Activated CD4-positive, alpha-beta T cell treated with anti-CD3 and anti-CD28 coated beads, Interleukin-2, amount 10 ng/mL, durations not matched to agents 7 days and 5 days (primary cell): ENCODE measurements at regions of chr20 and their contacts with region 1.

Region 1: DNA sequence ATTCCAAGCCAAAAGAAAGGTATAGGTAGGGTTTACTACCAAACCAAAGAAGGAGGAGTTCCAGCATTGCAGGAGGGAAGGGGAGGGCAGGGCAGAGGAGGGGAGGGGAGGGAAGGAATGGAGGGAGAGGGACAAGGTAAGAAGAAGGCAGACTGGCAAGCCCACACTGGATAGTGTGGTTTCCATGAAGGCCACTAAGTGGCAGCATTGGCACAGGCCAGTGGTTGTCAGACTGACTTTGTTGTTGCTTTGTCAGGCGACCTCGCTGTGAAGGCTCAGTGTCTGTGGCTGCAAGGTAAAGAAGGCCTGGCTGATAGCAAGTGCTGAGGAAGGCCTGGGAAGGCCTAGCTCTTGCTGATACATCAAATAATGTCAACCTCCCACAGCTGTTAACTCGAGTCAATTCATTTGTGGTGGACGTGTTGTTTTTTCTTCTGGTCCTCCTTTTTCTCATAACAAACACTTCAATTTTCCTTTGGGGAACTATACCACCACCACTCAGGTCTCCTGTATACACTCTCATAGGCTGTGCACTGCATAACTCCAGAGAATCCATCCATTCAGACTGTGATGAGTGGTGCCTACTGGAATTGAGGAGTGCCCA is 7.7 kb upstream of the ZNF334 start:
- DNase-seq: peak; percentile 63
- H3K4me3 Mint-ChIP-seq: no peak overlapping the region
- H3K27ac Mint-ChIP-seq: no peak overlapping the region
- H3K4me1 Mint-ChIP-seq: no peaks in the 10 kb centered on the region
- H3K27me3 Mint-ChIP-seq: peaks cover 25% of the 10 kb centered on the region

Region 2: DNA sequence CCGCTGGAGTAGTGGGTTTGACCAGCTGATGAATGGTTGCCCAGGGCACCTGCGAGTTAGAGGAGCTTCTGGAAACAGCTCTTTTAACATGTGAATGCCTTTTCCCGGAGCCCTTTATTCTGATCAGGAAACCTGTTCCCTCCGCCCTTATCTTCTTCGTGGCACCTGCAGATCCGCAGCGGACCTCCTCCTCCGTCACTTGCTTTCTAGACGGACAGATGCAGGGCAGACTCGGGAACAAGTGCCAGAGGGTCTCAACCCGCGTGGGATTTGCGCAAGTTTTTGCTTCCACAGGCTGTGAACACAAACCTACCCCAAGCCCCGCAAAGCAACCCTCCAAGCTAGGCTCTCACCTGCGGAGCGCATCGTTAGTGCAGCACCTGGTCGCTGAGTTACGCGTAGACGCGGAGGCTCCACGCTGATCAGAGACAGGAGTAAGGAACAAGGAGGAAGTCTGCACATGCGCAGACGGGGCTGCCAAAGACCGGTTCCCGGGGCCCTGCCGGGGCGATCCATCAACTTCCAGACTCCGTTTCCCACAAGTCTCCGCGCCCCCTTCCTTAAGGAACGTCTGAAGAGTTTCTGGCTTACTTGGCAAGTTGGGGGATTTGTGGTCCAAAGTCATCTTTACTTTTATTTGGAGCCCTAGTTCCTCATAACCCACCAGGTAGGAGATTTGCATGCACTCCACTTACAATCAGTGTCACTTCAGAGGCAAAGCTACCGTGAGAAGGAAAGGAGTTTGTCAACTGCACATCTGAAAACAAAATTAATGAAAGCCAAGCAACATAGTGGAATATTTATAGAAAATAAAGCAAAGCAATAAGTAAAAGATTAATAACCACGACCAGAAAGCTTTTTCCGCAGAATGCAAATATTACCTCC is 62.0 kb before region 1 on chr20:
- CTCF ChIA-PET with region 1: no interaction called
- POLR2A ChIA-PET with region 1: no interaction called
- DNase-seq: no peak
- H3K4me3 Mint-ChIP-seq: no peak overlapping the region
- H3K27ac Mint-ChIP-seq: no peak overlapping the region
- H3K4me1 Mint-ChIP-seq: no peaks in the 10 kb centered on the region
- H3K27me3 Mint-ChIP-seq: peaks cover 29% of the 10 kb centered on the region

Region 3: DNA sequence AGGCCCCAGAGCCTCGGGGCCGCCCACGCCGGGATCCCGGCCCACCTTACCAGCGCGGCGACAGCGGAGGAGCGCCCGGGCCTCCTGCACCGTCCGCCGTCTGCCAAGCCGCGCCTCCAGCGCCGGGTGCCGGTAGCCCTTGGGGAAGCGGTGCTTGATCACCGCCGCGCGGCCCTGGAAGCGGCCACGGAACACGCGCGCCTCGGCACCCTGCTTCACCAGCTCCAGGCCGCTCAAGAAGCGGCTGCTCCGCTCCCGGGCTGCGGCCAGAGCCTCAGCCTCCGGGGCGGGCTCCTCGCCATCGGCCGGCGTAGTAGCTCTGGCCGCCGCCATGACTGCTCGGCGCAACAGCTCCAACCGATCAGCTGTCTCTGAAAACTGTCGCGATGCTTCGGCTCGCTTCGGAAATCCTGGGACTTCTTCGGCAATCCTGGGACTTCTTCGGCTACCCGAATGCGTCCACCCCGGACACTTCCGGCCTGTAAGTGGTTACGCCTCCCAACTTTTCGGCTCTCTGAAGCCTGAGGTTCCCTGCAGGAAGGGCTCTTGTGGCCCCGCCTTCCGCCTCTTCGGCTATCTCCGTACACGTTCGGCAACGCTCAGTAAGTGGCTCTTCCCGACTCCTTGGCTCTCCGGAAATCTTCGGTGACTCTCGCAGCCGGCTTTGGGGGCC is 168.1 kb after region 1 on chr20 and contains the start of gene TP53RK:
- CTCF ChIA-PET with region 1: interaction called, 10 read pairs
- POLR2A ChIA-PET with region 1: no interaction called
- DNase-seq: peak; percentile 97
- H3K4me3 Mint-ChIP-seq: peak within 1 kb of the TSS; percentile 98
- H3K27ac Mint-ChIP-seq: peak within 1 kb of the TSS; percentile 96
- H3K4me1 Mint-ChIP-seq: peaks cover 43% of the 10 kb centered on the region
- H3K27me3 Mint-ChIP-seq: no peaks in the 10 kb centered on the region
- total RNA-seq, gene TP53RK: 15.2 to 18.0 TPM